Ovary (tissue), 10 donors: ENCODE measurements at regions of chr17 and their contacts with region 1.

Region 1: GRCh38 chr17:11074451-11074850 is 166.6 kb upstream of the SHISA6 start:
- DNase-seq: no peak
- H3K4me3 ChIP-seq: no peak overlapping the region
- H3K27ac ChIP-seq: no peak overlapping the region
- H3K4me1 ChIP-seq: no peaks in the 10 kb centered on the region
- H3K27me3 ChIP-seq: no peaks in the 10 kb centered on the region
- CTCF ChIP-seq: no peak
- EP300 ChIP-seq: no peak
- POLR2A ChIP-seq: no peak

Region 2: GRCh38 chr17:10713318-10713717 is 361.1 kb before region 1 on chr17:
- intact Hi-C with region 1: no loop called
- DNase-seq: no peak
- H3K4me3 ChIP-seq: no peak overlapping the region
- H3K27ac ChIP-seq: no peak overlapping the region
- H3K4me1 ChIP-seq: no peaks in the 10 kb centered on the region
- H3K27me3 ChIP-seq: no peaks in the 10 kb centered on the region
- CTCF ChIP-seq: no peak
- EP300 ChIP-seq: no peak
- POLR2A ChIP-seq: no peak

Region 3: GRCh38 chr17:11039342-11039741 is 35.1 kb before region 1 on chr17:
- intact Hi-C with region 1: loop called in 1 of 4 experiments (anchors 1 kb)
- DNase-seq: no peak
- H3K4me3 ChIP-seq: no peak overlapping the region
- H3K27ac ChIP-seq: no peak overlapping the region
- H3K4me1 ChIP-seq: no peaks in the 10 kb centered on the region
- H3K27me3 ChIP-seq: no peaks in the 10 kb centered on the region
- CTCF ChIP-seq: no peak
- EP300 ChIP-seq: no peak
- POLR2A ChIP-seq: no peak